B cell (primary cell): ENCODE measurements at regions of chr14 and their contacts with region 1.

Region 1: DNA sequence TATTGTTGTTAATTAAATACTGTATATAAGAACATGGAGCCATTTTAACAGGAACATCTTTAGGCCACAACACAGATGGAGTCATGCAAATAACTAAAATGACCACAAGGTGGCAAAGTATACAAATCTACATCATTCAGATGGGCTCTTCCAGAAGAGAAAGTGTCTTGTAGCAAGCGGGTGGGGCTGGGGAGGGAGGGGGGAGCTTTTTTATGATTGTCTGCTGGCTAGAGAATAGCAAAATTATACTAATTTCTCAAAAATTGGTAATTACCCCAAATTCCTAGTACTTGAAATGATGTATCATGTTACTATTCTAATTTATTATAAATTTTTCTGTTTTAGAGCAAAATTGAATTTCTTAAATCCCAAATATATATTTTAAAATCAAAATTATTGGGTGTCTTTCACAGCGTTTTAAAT is 378.7 kb downstream of the PRKD1 start:
- DNase-seq: peak; percentile 31
- ATAC-seq: peak; percentile 36
- H3K4me3 ChIP-seq: no peak overlapping the region
- H3K4me3 Mint-ChIP-seq: no peak overlapping the region
- H3K27ac ChIP-seq: no peak overlapping the region
- H3K27ac Mint-ChIP-seq: no peak overlapping the region
- H3K4me1 ChIP-seq: no peaks in the 10 kb centered on the region
- H3K4me1 Mint-ChIP-seq: no peaks in the 10 kb centered on the region
- H3K27me3 ChIP-seq: no peaks in the 10 kb centered on the region
- H3K27me3 Mint-ChIP-seq: peaks cover 3% of the 10 kb centered on the region
- CTCF ChIP-seq: peak; percentile 69

Region 2: DNA sequence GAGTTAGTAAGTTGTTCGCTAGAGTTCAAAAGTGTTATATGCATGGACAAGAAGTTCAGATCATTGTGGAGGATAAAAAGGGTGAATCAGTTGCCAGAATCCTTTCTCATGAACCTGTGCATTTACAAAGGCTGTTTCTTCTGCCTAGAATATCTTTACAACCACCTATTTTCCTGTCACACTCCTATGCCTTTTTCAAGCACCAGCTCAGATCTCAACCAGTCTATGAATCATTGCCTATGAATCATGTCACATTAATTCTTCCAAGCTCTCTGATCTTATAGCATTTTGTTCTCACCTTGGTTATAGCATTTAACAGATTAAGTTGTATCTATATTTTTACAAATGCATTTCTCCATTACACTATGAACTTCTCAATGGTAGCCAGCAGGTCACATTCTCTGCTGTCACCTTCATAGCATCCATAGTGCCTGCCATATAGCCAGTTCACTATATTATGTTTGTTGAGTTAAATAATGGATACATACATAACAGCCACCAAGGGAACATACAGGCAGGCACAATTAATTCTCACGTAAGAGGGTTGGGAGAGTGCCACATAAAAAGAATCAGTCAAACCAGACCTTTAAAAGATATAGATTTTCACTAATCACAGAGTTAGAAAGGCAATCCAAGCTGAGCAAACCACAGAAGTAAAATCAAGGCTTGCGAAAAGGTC is 209.3 kb before region 1 on chr14:
- CTCF ChIA-PET with region 1: no interaction called
- POLR2A ChIA-PET with region 1: no interaction called
- intact Hi-C with region 1: no loop called
- DNase-seq: no peak
- ATAC-seq: no peak
- H3K4me3 ChIP-seq: no peak overlapping the region
- H3K4me3 Mint-ChIP-seq: no peak overlapping the region
- H3K27ac ChIP-seq: no peak overlapping the region
- H3K27ac Mint-ChIP-seq: no peak overlapping the region
- H3K4me1 ChIP-seq: no peaks in the 10 kb centered on the region
- H3K4me1 Mint-ChIP-seq: no peaks in the 10 kb centered on the region
- H3K27me3 ChIP-seq: no peaks in the 10 kb centered on the region
- H3K27me3 Mint-ChIP-seq: no peaks in the 10 kb centered on the region
- CTCF ChIP-seq: no peak

Region 3: GRCh38 chr14:29601616-29602015 is 52.7 kb after region 1 on chr14:
- CTCF ChIA-PET with region 1: no interaction called
- POLR2A ChIA-PET with region 1: no interaction called
- intact Hi-C with region 1: no loop called
- DNase-seq: no peak
- ATAC-seq: no peak
- H3K4me3 ChIP-seq: no peak overlapping the region
- H3K4me3 Mint-ChIP-seq: no peak overlapping the region
- H3K27ac ChIP-seq: no peak overlapping the region
- H3K27ac Mint-ChIP-seq: no peak overlapping the region
- H3K4me1 ChIP-seq: no peaks in the 10 kb centered on the region
- H3K4me1 Mint-ChIP-seq: no peaks in the 10 kb centered on the region
- H3K27me3 ChIP-seq: no peaks in the 10 kb centered on the region
- H3K27me3 Mint-ChIP-seq: no peaks in the 10 kb centered on the region
- CTCF ChIP-seq: no peak

Region 4: DNA sequence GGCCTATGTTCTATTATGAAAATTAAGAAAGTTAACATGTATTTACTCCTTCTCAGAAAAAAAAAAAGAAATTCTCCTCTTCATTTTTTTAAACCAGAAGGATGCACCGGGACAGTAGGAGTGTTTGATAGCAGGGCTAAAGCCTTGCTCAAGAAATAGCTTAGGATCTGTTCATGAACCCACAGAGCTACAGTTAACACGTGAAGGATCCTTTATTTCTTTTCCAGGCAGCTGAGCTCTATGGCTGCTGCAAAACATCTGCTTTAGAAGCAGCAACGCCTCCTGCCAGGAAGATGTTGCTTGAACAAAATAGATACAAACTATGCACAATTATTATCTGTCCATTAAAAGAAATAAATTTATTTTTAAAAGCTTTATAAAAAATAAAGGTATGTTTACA is 123.9 kb after region 1 on chr14:
- CTCF ChIA-PET with region 1: no interaction called
- POLR2A ChIA-PET with region 1: no interaction called
- intact Hi-C with region 1: no loop called
- DNase-seq: no peak
- ATAC-seq: no peak
- H3K4me3 ChIP-seq: no peak overlapping the region
- H3K4me3 Mint-ChIP-seq: no peak overlapping the region
- H3K27ac ChIP-seq: no peak overlapping the region
- H3K27ac Mint-ChIP-seq: no peak overlapping the region
- H3K4me1 ChIP-seq: no peaks in the 10 kb centered on the region
- H3K4me1 Mint-ChIP-seq: no peaks in the 10 kb centered on the region
- H3K27me3 ChIP-seq: no peaks in the 10 kb centered on the region
- H3K27me3 Mint-ChIP-seq: no peaks in the 10 kb centered on the region
- CTCF ChIP-seq: no peak

Region 5: GRCh38 chr14:29741909-29742401 is 193.0 kb after region 1 on chr14:
- CTCF ChIA-PET with region 1: no interaction called
- POLR2A ChIA-PET with region 1: no interaction called
- intact Hi-C with region 1: no loop called
- DNase-seq: no peak
- ATAC-seq: no peak
- H3K4me3 ChIP-seq: no peak overlapping the region
- H3K4me3 Mint-ChIP-seq: no peak overlapping the region
- H3K27ac ChIP-seq: no peak overlapping the region
- H3K27ac Mint-ChIP-seq: no peak overlapping the region
- H3K4me1 ChIP-seq: no peaks in the 10 kb centered on the region
- H3K4me1 Mint-ChIP-seq: peaks cover 8% of the 10 kb centered on the region
- H3K27me3 ChIP-seq: no peaks in the 10 kb centered on the region
- H3K27me3 Mint-ChIP-seq: no peaks in the 10 kb centered on the region
- CTCF ChIP-seq: no peak

Region 6: DNA sequence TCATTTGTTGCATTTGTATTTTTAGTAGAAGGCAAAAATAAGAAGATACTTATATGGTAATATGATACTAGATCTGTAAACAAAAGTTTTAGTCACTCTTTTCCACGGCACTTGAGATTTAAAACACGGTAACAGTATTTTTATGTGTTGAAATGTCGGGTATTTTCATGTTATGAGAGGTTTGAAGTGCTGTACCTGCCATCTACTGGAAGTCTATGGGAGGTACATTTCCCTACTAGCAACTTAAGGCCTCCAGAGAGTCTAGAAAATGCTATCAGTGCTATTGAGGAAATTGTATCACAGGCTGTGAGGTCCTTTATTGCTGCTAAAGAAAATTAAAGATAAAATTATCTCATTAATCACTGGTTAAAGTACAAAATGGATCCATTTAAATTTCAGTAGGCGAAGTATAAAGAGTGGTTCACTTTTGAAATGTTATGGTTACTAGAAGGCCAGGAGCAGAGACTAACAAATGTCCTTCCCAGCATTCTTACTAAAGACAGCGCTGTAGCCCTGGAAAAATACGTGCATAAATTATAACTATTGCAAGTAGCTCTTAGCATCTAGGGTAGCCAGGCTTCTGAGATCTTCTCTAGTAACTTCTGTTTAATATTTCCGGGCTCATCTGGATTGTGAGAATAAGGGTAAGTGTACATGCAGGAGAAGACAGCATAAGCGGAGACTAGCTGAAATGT is 456.3 kb after region 1 on chr14:
- CTCF ChIA-PET with region 1: interaction called, 21 read pairs
- POLR2A ChIA-PET with region 1: no interaction called
- intact Hi-C with region 1: no loop called
- DNase-seq: peak; percentile 25
- ATAC-seq: no peak
- H3K4me3 ChIP-seq: no peak overlapping the region
- H3K4me3 Mint-ChIP-seq: no peak overlapping the region
- H3K27ac ChIP-seq: no peak overlapping the region
- H3K27ac Mint-ChIP-seq: no peak overlapping the region
- H3K4me1 ChIP-seq: no peaks in the 10 kb centered on the region
- H3K4me1 Mint-ChIP-seq: no peaks in the 10 kb centered on the region
- H3K27me3 ChIP-seq: no peaks in the 10 kb centered on the region
- H3K27me3 Mint-ChIP-seq: no peaks in the 10 kb centered on the region
- CTCF ChIP-seq: peak; percentile 76

Region 7: GRCh38 chr14:30214461-30215090 is 665.6 kb after region 1 on chr14:
- CTCF ChIA-PET with region 1: interaction called, 7 read pairs
- POLR2A ChIA-PET with region 1: no interaction called
- intact Hi-C with region 1: loop called (anchors 2 kb)
- DNase-seq: peak; percentile 6
- ATAC-seq: no peak
- H3K4me3 ChIP-seq: no peak overlapping the region
- H3K4me3 Mint-ChIP-seq: no peak overlapping the region
- H3K27ac ChIP-seq: no peak overlapping the region
- H3K27ac Mint-ChIP-seq: no peak overlapping the region
- H3K4me1 ChIP-seq: no peaks in the 10 kb centered on the region
- H3K4me1 Mint-ChIP-seq: no peaks in the 10 kb centered on the region
- H3K27me3 ChIP-seq: no peaks in the 10 kb centered on the region
- H3K27me3 Mint-ChIP-seq: no peaks in the 10 kb centered on the region
- CTCF ChIP-seq: peak; percentile 35